ENCODE measurements at regions of chr4 and their contacts with region 1.

Region 1: GRCh38 chr4:180028682-180029081 is 2214.5 kb upstream of the TENM3 start:
- DNase-seq: peak; percentile 13 to 65
- H3K4me3 ChIP-seq: no peak overlapping the region
- H3K27ac ChIP-seq: no peak overlapping the region
- H3K4me1 ChIP-seq: no peaks in the 10 kb centered on the region
- H3K27me3 ChIP-seq: no peaks in the 10 kb centered on the region
- CTCF ChIP-seq: peak in 2 of 3 experiments; percentile 46 to 61; a peak in 2 of 4 replicates
- EP300 ChIP-seq: no peak
- POLR2A ChIP-seq: no peak
- RAD21 ChIP-seq: peak; percentile 55 to 61

Region 2: GRCh38 chr4:179867300-179867878 is 161.3 kb before region 1 on chr4:
- CTCF ChIA-PET with region 1: interaction called, 21 read pairs
- POLR2A ChIA-PET with region 1: no interaction called
- DNase-seq: peak; percentile 79 to 88
- H3K4me3 ChIP-seq: no peak overlapping the region
- H3K27ac ChIP-seq: no peak overlapping the region
- H3K4me1 ChIP-seq: no peaks in the 10 kb centered on the region
- H3K27me3 ChIP-seq: peaks cover 0 to 1% (median 0%) of the 10 kb centered on the region in 4 experiments; a peak in 1 of 7 replicates
- CTCF ChIP-seq: peak; percentile 87 to 97 (median 96)
- EP300 ChIP-seq: no peak
- POLR2A ChIP-seq: no peak
- RAD21 ChIP-seq: peak; percentile 91 to 93

Region 3: GRCh38 chr4:179927473-179927872 is 101.2 kb before region 1 on chr4:
- CTCF ChIA-PET with region 1: no interaction called
- POLR2A ChIA-PET with region 1: no interaction called
- DNase-seq: no peak
- H3K4me3 ChIP-seq: no peak overlapping the region
- H3K27ac ChIP-seq: no peak overlapping the region
- H3K4me1 ChIP-seq: no peaks in the 10 kb centered on the region
- H3K27me3 ChIP-seq: no peaks in the 10 kb centered on the region
- CTCF ChIP-seq: no peak
- EP300 ChIP-seq: no peak
- POLR2A ChIP-seq: no peak
- RAD21 ChIP-seq: no peak

Region 4: DNA sequence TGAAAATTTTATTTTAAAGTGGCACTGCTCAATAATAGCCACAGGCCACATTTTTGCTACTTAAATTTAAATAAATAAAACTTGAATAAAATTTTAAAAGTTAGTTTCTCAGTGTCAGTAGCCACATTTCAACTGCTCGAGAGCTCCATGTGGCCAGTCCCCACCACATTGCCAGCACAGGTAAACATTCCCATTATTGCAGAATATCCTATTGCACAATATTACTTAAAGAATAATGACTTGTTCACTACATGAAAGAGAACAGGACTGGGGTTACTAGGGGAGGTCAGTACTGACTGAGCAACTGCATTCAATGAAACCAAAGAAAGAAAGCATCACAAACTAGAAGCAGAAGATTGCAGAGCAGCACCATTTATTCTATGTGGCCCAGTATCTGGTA is 12.9 kb after region 1 on chr4:
- CTCF ChIA-PET with region 1: interaction called, 10 read pairs
- POLR2A ChIA-PET with region 1: no interaction called
- DNase-seq: no peak
- H3K4me3 ChIP-seq: no peak overlapping the region
- H3K27ac ChIP-seq: no peak overlapping the region
- H3K4me1 ChIP-seq: no peaks in the 10 kb centered on the region
- H3K27me3 ChIP-seq: peaks cover 0 to 1% (median 0%) of the 10 kb centered on the region in 4 experiments; a peak in 1 of 7 replicates
- CTCF ChIP-seq: no peak
- EP300 ChIP-seq: no peak
- POLR2A ChIP-seq: no peak
- RAD21 ChIP-seq: no peak

Measured in H1 (cell line).